BJ (cell line): ENCODE measurements at regions of chr15 and their contacts with region 1.

Region 1: GRCh38 chr15:39580117-39580484 is 778 bp upstream of the THBS1 start:
- DNase-seq: peak; percentile 96
- H3K4me3 ChIP-seq: peak overlapping the region; percentile 54
- H3K27me3 ChIP-seq: no peaks in the 10 kb centered on the region
- CTCF ChIP-seq: peak; percentile 85

Region 2: DNA sequence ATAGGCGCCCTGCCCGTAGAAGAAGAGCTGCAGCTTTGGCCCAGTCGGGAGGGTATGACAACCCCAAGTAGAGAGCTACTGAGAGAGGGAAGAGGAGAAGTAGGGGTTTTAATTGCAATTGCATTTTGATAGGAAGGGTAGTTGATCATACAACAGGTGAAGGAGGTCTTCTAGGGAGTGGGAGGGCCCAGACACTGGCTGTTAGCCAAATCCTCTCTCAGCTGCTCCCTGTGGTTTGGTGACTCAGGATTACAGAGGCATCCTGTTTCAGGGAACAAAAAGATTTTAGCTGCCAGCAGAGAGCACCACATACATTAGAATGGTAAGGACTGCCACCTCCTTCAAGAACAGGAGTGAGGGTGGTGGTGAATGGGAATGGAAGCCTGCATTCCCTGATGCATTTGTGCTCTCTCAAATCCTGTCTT is 408.1 kb before region 1 on chr15:
- CTCF ChIA-PET with region 1: interaction called, 12 read pairs
- POLR2A ChIA-PET with region 1: no interaction called
- DNase-seq: peak; percentile 86
- H3K4me3 ChIP-seq: no peak overlapping the region
- H3K27me3 ChIP-seq: no peaks in the 10 kb centered on the region
- CTCF ChIP-seq: peak; percentile 41

Region 3: DNA sequence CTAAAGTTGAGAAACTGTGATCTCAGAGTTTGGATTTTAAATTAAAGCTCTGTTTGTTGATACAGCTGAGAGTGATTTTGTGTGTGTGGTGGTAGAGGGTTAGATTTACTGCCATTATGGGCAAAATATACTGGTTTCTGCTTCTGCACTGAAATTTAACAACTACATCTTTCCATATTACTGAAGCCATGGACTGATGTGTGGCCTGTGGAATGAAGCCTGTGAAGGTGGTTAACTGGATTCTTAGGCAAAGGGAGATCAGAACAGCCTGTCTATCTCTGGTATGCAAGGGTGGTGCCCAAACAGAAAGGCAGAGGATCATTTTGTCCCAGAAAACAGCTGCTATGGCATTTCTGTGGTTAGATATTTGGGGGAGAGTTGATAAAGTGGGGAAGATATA is 296.6 kb before region 1 on chr15:
- CTCF ChIA-PET with region 1: interaction called, 3 read pairs
- POLR2A ChIA-PET with region 1: interaction called, 10 read pairs
- DNase-seq: no peak
- H3K4me3 ChIP-seq: no peak overlapping the region
- H3K27me3 ChIP-seq: no peaks in the 10 kb centered on the region
- CTCF ChIP-seq: no peak

Region 4: GRCh38 chr15:39332846-39333245 is 247.3 kb before region 1 on chr15:
- CTCF ChIA-PET with region 1: no interaction called
- POLR2A ChIA-PET with region 1: no interaction called
- DNase-seq: no peak
- H3K4me3 ChIP-seq: no peak overlapping the region
- H3K27me3 ChIP-seq: no peaks in the 10 kb centered on the region
- CTCF ChIP-seq: no peak

Region 5: DNA sequence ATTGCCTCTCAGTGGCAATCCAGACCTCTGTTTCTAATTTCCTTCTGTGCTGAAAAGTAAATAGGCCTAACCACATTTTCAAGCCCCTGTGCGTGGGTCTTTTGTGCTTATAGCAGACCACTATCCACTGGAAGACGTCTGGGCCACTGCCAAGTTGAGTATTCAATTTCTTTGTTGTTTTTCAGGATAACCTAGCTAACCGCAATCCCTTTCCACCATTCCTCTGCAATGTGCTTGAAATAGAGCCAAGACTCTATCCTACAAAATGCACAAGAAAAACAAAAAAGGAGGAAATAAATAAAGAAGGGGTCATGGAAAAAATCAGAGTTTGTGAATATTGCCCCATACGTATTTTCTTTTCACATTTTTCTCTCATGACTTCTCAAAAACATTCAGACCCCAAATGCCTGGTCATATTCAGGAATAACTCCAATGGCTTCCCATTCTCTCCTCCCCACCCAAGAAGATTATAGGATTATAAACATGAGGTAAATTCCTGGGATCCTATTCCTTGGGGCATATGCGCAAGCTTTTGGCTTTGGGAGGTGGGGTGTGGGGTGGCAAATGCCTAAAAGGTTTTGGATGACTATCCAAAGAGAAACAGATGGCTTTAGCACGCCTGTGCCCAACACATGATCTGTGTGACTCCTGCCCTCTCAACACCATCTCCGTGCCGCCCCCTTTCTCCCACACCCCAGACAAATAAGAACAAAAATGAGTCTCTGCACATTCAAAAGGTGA is 217.1 kb before region 1 on chr15:
- CTCF ChIA-PET with region 1: interaction called, 5 read pairs
- POLR2A ChIA-PET with region 1: interaction called, 60 read pairs
- DNase-seq: peak; percentile 98
- H3K4me3 ChIP-seq: no peak overlapping the region
- H3K27me3 ChIP-seq: no peaks in the 10 kb centered on the region
- CTCF ChIP-seq: no peak

Region 6: DNA sequence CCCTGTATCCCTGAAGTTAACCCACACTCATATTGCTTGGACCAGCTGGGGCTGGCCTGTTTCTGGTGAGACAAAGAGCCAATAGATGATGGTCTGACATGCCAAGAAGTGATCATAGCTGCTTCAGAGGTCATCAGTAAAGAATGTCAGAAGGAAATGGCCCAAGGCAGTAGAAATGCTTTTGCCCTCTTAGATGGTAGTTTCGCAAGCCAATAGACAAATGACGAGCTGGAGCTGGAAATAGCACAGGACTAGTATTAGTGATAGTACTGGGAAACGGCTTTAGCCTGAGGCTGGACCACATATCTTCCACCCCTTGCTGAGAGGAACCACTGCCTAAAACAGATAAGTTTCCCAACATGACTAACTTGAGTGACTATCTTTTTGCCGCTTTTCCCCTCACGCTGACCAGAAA is 175.3 kb before region 1 on chr15:
- CTCF ChIA-PET with region 1: interaction called, 8 read pairs
- POLR2A ChIA-PET with region 1: interaction called, 21 read pairs
- DNase-seq: peak; percentile 99
- H3K4me3 ChIP-seq: no peak overlapping the region
- H3K27me3 ChIP-seq: no peaks in the 10 kb centered on the region
- CTCF ChIP-seq: no peak

Region 7: DNA sequence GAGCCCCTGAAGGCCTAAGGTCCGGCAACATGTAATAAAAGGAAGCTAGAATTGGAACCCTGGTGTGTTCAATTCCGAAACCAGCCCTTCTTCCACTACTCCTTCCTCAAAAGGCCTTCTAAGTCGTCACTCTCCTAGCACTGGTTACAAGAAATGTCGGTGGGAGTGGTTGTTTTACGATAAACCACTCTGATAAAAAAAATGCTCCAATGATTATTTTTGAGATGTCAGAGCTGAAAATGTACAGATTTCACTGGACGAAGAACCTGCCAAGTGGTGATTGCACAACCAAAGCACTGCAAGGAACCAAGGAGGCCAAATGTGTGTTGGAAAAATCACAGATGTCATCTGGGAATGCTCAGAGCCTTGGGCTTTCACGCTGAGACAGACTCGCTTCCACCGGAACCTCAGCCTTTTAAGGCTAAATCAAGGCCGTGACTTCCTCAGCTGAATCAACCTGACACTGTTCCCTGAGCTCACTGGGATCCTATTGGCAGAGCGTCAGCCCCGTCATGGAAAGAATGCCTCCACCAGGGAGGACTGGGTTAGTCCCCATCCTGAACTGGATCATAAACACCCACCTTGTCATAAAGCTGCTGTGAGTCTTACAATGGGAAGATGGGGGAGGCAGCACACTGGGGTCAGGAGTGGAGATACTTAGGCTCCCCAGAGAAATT is 107.3 kb before region 1 on chr15:
- CTCF ChIA-PET with region 1: interaction called, 25 read pairs
- POLR2A ChIA-PET with region 1: interaction called, 88 read pairs
- DNase-seq: peak; percentile 100
- H3K4me3 ChIP-seq: no peak overlapping the region
- H3K27me3 ChIP-seq: no peaks in the 10 kb centered on the region
- CTCF ChIP-seq: no peak